ENCODE measurements at regions of chr17 and their contacts with region 1.

Region 1: DNA sequence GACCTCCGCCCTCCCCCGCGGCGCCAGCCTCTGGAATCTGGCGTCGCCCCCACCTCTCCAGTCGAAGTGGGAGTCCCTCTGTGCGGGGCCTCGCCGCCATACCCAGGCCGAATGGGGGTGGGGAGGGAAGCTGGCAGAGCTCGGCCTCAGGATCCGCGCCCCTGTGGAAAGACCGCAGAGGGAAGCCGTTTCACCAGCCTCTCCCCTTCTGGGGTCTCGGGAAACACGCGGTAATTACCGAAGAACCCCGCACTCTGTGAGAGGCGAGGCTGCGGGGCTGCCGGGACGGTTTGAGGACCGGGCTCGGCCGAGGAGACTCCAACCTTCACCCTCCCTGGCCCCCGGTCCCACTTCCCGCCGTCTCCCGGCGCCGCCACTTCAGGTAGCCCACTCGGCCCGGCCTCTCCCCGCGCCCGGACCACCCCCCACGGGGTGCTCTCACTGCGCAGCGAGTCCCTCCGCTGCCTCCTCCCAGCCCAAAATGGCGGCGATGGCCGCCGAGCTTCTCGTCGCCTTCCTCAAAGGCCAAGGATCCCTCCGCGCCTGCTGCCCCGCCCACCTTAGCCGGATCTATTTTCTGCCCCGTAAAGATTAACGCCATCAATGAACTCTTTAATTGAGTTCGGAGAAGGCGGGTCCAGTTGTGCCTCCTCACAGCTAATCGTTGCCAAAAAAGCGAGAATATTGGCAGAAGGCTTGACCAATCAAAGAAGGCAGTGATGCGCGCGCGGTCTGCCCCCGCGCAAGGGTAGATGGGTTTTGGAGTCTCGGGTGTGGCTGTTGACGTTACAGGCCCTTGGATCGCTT is 453 bp upstream of the HEXIM2 start:
- DNase-seq: peak; percentile 89 to 100 (median 99)
- ATAC-seq: peak; percentile 93
- H3K4me3 ChIP-seq: peak overlapping the region; percentile 95
- H3K4me3 Mint-ChIP-seq: peak overlapping the region; percentile 88 to 100 (median 96)
- H3K27ac ChIP-seq: peak overlapping the region; percentile 98
- H3K27ac Mint-ChIP-seq: peak overlapping the region; percentile 97 to 100 (median 98)
- H3K4me1 ChIP-seq: peaks cover 15 to 27% of the 10 kb centered on the region in 2 donors
- H3K4me1 Mint-ChIP-seq: peaks cover 29 to 48% (median 43%) of the 10 kb centered on the region in 7 donors
- H3K27me3 ChIP-seq: no peaks in the 10 kb centered on the region
- H3K27me3 Mint-ChIP-seq: no peaks in the 10 kb centered on the region

Region 2: DNA sequence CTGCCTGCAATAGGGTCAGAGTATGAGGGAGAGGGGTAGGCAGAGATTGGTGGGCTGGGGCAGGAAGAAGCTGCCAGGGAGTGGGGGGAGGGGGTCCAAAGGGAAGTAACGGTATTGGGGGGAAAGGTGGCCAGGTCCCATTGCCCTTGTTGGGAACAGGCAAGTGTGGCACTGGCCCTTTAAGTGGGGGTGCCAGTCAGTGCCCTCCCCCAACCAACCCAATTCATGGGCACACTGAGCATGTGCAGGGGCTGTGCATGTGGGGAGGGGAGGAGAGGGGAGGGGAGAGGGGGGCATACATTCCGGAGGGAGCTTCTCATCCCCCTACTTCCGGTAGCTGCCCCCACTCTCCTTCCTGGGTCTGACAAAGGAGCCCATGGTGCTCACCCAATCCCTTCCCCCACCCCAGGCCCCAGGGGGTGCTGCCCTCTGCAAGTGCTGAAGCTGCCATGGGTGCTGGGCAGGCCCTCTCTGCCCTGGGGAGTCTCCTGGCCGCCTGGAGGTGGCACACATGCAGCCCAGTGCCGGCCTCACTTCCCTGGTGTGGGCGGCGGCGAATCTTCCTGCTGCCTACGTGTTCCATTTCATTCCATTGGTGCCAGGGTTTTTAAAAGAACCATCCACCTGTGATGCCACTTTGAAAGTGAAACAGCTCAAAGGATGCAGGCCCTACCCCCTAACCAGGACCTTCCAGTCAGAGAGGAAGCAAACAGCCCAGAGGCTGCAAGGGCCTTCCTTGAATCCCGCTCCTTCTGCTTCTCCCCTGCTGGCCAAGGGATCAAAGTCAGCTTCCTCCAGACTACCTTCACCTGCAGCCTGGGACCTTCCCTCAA is 11.4 kb after region 1 on chr17:
- CTCF ChIA-PET with region 1: interaction called, 3 read pairs
- POLR2A ChIA-PET with region 1: interaction called, 73 read pairs
- intact Hi-C with region 1: loop called (anchors 1 kb)
- DNase-seq: peak in 8 of 9 donors; percentile 45 to 61 (median 55)
- ATAC-seq: peak; percentile 79
- H3K4me3 ChIP-seq: peak overlapping the region; percentile 65
- H3K4me3 Mint-ChIP-seq: peak overlapping the region; percentile 71 to 95 (median 86)
- H3K27ac ChIP-seq: peak overlapping the region; percentile 63
- H3K27ac Mint-ChIP-seq: peak overlapping the region; percentile 63 to 98 (median 94)
- H3K4me1 ChIP-seq: peaks cover 7 to 14% of the 10 kb centered on the region in 2 donors
- H3K4me1 Mint-ChIP-seq: peaks cover 8 to 31% (median 24%) of the 10 kb centered on the region in 7 donors
- H3K27me3 ChIP-seq: no peaks in the 10 kb centered on the region
- H3K27me3 Mint-ChIP-seq: no peaks in the 10 kb centered on the region

Region 3: DNA sequence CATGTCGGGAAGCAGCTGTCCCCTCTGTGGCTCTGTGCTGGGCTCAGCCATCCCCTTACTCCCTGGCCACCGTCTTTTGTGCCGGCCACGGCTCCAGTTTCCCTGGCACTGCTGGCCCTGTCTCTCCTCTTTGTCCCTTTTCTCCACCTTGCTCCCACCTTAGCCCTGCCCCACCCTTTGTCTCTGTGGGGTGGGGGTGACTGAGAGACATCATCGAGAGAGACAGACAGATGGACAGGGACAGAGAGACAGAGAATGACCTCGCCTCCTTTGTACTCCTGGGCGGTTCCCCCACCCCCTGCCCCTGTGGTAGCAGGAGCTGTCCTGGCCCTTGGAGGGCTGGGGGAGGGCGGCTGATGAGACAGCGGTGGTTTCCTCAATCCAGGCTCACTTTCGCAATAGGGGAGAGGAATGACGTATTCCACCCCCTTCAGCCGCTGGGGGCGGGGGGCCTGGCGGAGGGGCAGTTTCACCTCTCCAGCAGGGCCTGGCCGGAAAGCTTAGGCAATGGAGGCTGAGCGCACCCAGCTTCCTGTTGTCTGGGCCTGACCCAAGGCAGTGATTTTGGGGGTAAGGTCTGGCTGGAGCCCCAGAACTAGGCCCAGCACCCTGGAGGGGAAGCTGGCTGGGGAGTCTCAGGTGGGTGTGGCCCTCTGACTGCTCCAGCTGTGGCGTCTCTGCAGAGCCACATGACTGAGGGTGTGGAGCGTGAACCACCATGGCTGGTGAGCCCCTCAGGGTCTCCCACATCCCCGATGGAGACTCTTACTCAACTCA is 67.7 kb after region 1 on chr17:
- CTCF ChIA-PET with region 1: interaction called, 6 read pairs
- POLR2A ChIA-PET with region 1: interaction called, 16 read pairs
- intact Hi-C with region 1: loop called (anchors 1 to 2 kb)
- DNase-seq: peak; percentile 64 to 92 (median 74)
- ATAC-seq: peak; percentile 66
- H3K4me3 ChIP-seq: peak overlapping the region; percentile 91
- H3K4me3 Mint-ChIP-seq: peak overlapping the region; percentile 83 to 99 (median 96)
- H3K27ac ChIP-seq: peak overlapping the region; percentile 96
- H3K27ac Mint-ChIP-seq: peak overlapping the region; percentile 96 to 100 (median 99)
- H3K4me1 ChIP-seq: peaks cover 62 to 77% of the 10 kb centered on the region in 2 donors
- H3K4me1 Mint-ChIP-seq: peaks cover 54 to 91% (median 77%) of the 10 kb centered on the region in 7 donors
- H3K27me3 ChIP-seq: no peaks in the 10 kb centered on the region
- H3K27me3 Mint-ChIP-seq: no peaks in the 10 kb centered on the region

Region 4: DNA sequence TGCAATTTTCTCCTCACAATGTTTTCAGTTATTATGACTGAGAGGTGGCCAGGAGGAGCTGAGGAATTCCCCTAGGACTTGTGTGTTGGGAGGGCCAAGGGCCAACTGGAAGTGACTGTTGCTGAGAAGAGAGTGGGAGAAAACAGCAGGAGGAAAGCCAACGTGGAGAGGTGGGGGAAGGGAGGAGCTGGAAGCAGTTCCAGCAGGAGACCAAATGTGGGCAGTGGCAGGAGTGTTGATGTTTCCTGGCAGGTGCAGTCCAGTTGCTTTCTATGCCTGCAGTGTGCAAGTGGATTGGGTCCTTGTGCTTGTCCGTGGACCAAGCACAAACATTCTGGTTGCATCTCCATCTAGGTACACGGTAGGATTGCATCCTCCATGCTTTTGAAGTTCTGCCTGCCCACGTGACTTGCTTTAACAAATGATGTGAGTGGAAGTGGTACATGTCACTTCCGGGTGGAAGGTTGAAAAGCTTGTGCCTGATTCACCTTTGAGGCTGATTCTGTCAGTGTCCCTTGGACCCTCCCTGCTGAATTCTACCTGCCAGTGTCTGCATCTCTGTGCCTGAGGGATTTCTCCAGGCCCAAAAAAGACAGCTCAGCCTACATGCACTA is 568.2 kb after region 1 on chr17:
- CTCF ChIA-PET with region 1: no interaction called
- POLR2A ChIA-PET with region 1: no interaction called
- intact Hi-C with region 1: no loop called
- DNase-seq: no peak
- ATAC-seq: no peak
- H3K4me3 ChIP-seq: no peak overlapping the region
- H3K4me3 Mint-ChIP-seq: no peak overlapping the region
- H3K27ac ChIP-seq: no peak overlapping the region
- H3K27ac Mint-ChIP-seq: no peak overlapping the region
- H3K4me1 ChIP-seq: no peaks in the 10 kb centered on the region
- H3K4me1 Mint-ChIP-seq: no peaks in the 10 kb centered on the region
- H3K27me3 ChIP-seq: no peaks in the 10 kb centered on the region
- H3K27me3 Mint-ChIP-seq: peaks cover 23 to 57% (median 46%) of the 10 kb centered on the region in 5 donors